Common myeloid progenitor, CD34-positive (primary cell): ENCODE measurements at regions of chr1 and their contacts with region 1.

Region 1: DNA sequence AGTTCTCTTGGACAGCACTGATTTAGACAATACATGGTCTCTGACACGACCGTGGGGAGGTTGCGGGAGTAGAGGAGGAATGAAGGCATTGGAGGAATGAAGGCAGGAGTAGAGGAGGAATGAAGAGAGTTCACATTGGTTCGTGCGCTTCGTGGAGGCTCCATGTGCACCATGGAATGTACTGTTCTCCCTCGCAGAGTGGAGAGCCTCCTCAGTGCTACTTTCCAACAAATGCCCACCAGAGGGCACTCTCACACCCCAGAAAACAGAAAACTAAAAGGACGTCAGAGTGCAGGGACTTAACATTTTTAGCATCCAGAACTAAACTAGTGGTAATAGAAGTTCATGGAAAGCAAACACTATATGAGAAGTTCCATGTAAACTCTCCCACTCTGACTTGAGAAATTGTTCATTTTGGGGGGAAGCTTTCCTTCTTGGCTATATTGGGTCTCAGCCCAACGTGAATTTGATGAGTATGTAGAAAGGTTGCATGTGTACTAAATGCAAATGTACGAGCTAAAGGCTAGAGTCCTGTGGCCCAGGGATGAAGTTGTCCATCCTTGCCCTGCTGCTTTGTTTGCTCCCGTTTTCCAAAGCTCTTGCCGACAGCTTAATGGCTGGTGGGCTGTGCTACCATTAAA is 211.6 kb downstream of the LMX1A start:
- DNase-seq: peak; percentile 39 to 63 (median 44)
- H3K4me3 ChIP-seq: no peak overlapping the region
- H3K27ac ChIP-seq: no peak overlapping the region
- H3K4me1 ChIP-seq: no peaks in the 10 kb centered on the region
- H3K27me3 ChIP-seq: peaks cover 2 to 28% (median 2%) of the 10 kb centered on the region in 5 experiments

Region 2: GRCh38 chr1:165129568-165130164 is 15.2 kb before region 1 on chr1:
- CTCF ChIA-PET with region 1: interaction called, 13 read pairs
- POLR2A ChIA-PET with region 1: no interaction called
- DNase-seq: peak; percentile 54 to 80 (median 78)
- H3K4me3 ChIP-seq: no peak overlapping the region
- H3K27ac ChIP-seq: no peak overlapping the region
- H3K4me1 ChIP-seq: no peaks in the 10 kb centered on the region
- H3K27me3 ChIP-seq: peaks cover 2 to 41% (median 9%) of the 10 kb centered on the region in 5 experiments